ENCODE measurements at regions of chrX and their contacts with region 1.

Region 1: GRCh38 chrX:140701480-140701879 is 8.1 kb upstream of the LINC00632 start:
- DNase-seq: peak; percentile 69
- H3K4me3 ChIP-seq: no peak overlapping the region
- H3K27ac ChIP-seq: no peak overlapping the region
- H3K4me1 ChIP-seq: no peaks in the 10 kb centered on the region
- H3K27me3 ChIP-seq: no peaks in the 10 kb centered on the region
- CTCF ChIP-seq: peak; percentile 71

Region 2: GRCh38 chrX:140391313-140391712 is 310.2 kb before region 1 on chrX:
- CTCF ChIA-PET with region 1: no interaction called
- POLR2A ChIA-PET with region 1: no interaction called
- intact Hi-C with region 1: no loop called
- DNase-seq: no peak
- H3K4me3 ChIP-seq: no peak overlapping the region
- H3K27ac ChIP-seq: no peak overlapping the region
- H3K4me1 ChIP-seq: no peaks in the 10 kb centered on the region
- H3K27me3 ChIP-seq: peaks cover 3% of the 10 kb centered on the region
- CTCF ChIP-seq: no peak

Region 3: DNA sequence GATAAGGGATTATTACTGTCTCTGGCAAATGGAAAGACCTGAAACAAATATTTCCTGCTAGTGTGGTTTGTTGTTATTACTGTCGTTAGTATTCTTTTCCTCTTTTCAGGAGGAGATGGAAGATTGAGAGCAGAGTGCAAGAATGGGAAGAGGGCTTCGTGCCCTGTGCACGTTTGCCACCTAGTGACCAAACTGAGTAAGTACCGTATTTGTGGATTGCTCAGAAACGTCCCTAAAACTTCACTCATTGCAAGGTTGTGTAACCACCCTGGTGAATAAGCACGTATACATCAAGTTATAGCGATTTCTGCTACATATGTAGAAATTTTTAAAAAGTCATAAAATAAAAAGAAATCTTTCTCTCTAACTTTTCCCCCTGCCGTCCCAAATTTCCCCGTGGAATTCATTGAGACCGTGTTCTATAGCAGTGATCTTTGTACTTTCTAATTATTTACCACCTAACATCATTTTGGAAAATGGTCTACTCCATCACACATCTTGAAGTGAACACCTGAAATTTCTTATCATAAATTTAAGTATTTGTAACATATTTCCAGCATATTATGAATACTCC is 32.4 kb after region 1 on chrX:
- CTCF ChIA-PET with region 1: no interaction called
- POLR2A ChIA-PET with region 1: no interaction called
- intact Hi-C with region 1: loop called (anchors 1 kb)
- DNase-seq: peak; percentile 63
- H3K4me3 ChIP-seq: no peak overlapping the region
- H3K27ac ChIP-seq: no peak overlapping the region
- H3K4me1 ChIP-seq: no peaks in the 10 kb centered on the region
- H3K27me3 ChIP-seq: no peaks in the 10 kb centered on the region
- CTCF ChIP-seq: peak; percentile 76